ENCODE measurements at regions of chr2 and their contacts with region 1.

Region 1: DNA sequence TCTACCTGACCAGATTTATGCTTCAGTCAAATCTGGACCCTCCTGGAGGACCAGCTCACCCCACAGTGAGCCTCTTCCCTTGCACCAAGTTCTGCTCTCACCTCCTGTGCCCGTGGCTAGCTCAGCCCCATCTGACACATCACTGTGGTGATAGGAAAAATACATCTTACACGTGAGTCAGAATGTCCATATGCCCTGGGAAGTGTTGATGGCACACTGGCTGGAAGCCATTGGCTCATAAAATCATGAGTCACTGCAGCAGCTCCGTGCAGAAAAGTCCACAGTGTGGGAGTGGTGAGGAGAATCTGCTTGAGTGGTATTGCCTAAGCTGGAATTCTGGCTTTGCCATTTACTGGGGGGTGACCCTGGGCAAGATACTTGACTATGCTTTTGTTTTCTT is 42.6 kb upstream of the RAPGEF4 start:
- DNase-seq: peak; percentile 41 to 81 (median 78)
- H3K4me3 ChIP-seq: peak overlapping the region in 2 of 7 experiments; percentile 16 to 17
- H3K27ac ChIP-seq: no peak overlapping the region
- H3K4me1 ChIP-seq: peaks cover 6 to 14% (median 11%) of the 10 kb centered on the region in 4 experiments
- H3K27me3 ChIP-seq: peaks cover 0 to 13% (median 2%) of the 10 kb centered on the region in 5 experiments

Region 2: DNA sequence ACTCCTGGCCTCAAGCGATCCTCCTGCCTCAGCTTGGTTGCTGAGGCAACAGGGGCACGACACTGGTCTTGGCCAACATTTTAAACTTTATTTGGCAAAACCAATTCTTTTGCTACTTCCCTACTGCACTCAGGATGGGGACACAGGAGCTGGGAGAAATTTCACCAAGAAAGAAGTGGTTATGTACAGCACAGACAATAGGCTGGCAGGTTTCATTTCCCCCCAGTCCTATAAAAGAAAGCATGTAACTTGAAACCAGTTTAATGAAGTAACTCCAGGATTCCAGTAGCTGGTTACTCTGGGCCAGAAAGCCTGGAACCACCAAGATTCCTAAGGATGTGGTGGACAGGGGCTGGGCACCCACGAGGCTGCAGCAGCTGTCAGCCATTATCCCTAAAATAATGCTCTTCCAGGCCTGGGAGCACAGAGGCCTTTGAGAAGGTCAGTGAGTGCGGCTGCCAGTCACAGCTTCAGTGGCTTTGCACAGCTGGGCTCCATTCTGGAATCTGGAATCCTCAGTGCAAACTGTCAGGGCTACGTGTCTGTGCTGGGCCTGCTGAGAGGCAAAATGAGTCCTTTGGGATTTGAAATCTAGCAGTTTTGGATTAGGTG is 407.9 kb before region 1 on chr2:
- CTCF ChIA-PET with region 1: no interaction called
- POLR2A ChIA-PET with region 1: no interaction called
- DNase-seq: peak in 1 of 3 donors; percentile 14
- H3K4me3 ChIP-seq: no peak overlapping the region
- H3K27ac ChIP-seq: no peak overlapping the region
- H3K4me1 ChIP-seq: peaks cover 17 to 64% (median 60%) of the 10 kb centered on the region in 4 experiments
- H3K27me3 ChIP-seq: no peaks in the 10 kb centered on the region

Region 3: GRCh38 chr2:172674034-172674967 is 18.7 kb before region 1 on chr2:
- CTCF ChIA-PET with region 1: interaction called, 10 read pairs
- POLR2A ChIA-PET with region 1: no interaction called
- DNase-seq: peak; percentile 40 to 55 (median 41)
- H3K4me3 ChIP-seq: peak overlapping the region in 4 of 7 experiments; percentile 3 to 37 (median 26)
- H3K27ac ChIP-seq: no peak overlapping the region
- H3K4me1 ChIP-seq: peaks cover 0 to 6% (median 3%) of the 10 kb centered on the region in 4 experiments
- H3K27me3 ChIP-seq: peaks cover 0 to 32% (median 11%) of the 10 kb centered on the region in 5 experiments

Region 4: GRCh38 chr2:172704072-172704936 is 11.3 kb after region 1 on chr2:
- CTCF ChIA-PET with region 1: no interaction called
- POLR2A ChIA-PET with region 1: no interaction called
- DNase-seq: peak in 1 of 3 donors; percentile 20
- H3K4me3 ChIP-seq: no peak overlapping the region
- H3K27ac ChIP-seq: no peak overlapping the region
- H3K4me1 ChIP-seq: no peaks in the 10 kb centered on the region
- H3K27me3 ChIP-seq: peaks cover 0 to 44% (median 23%) of the 10 kb centered on the region in 5 experiments

Measured in common myeloid progenitor, CD34-positive (primary cell).